Prostate gland (tissue), 2 donors: ENCODE measurements at regions of chr19 and their contacts with region 1.

Region 1: GRCh38 chr19:13861732-13862531 is 15.0 kb upstream of the NANOS3 start:
- DNase-seq: peak; percentile 89
- H3K4me3 ChIP-seq: peak overlapping the region; percentile 22 to 31
- H3K27ac ChIP-seq: peak overlapping the region; percentile 82 to 85
- H3K4me1 ChIP-seq: peaks cover 8% of the 10 kb centered on the region
- H3K27me3 ChIP-seq: no peaks in the 10 kb centered on the region
- CTCF ChIP-seq: peak; percentile 95 to 99 (median 98)
- POLR2A ChIP-seq: peak; percentile 8

Region 2: GRCh38 chr19:13150187-13150930 is 711.6 kb before region 1 on chr19 and contains the starts of genes IER2 and STX10:
- intact Hi-C with region 1: loop called (anchors 10 kb)
- DNase-seq: peak; percentile 95
- H3K4me3 ChIP-seq: peak within 1 kb of the TSS; percentile 83 to 92
- H3K27ac ChIP-seq: peak within 1 kb of the TSS; percentile 98 to 100
- H3K4me1 ChIP-seq: no peaks in the 10 kb centered on the region
- H3K27me3 ChIP-seq: no peaks in the 10 kb centered on the region
- CTCF ChIP-seq: peak; percentile 71 to 96 (median 84)
- POLR2A ChIP-seq: peak; percentile 81
- total RNA-seq, gene IER2: 34.7 to 75.7 TPM
- total RNA-seq, gene STX10: 42.5 to 48.6 TPM

Region 3: DNA sequence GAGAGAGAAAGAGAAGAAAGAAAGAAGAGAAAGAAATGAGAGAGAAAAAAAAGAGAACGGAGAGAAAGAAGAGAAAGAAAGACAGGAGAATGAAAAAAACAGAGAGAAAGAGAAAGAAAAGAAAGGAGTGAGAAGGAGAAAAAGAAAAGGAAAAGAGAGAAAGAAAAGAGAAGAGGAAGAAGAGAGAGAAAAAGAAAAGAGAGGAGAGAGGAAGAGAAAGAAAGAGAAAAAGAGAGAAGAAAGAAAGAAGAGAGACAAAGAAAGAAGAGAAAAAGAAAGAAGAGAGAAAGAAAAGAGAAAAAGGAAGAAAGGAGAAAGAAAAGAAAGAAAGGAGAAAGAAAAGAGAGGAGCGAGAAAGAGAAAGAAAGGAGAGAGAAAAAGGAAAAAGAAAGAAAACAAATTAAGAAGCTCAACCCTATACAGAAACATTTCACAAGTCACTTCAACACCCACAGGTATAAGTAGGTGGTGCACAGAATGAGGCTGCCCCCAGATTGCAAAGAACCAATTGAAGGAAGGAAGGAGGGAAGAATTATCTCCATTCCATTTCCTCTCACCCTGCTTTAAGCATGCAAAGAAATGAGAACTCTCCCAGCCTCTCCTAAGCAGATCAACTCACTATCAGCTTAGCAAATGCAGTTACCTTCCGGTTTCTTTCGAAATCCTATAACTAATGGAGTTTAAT is 256.9 kb before region 1 on chr19:
- intact Hi-C with region 1: loop called (anchors 10 kb)
- DNase-seq: no peak
- H3K4me3 ChIP-seq: no peak overlapping the region
- H3K27ac ChIP-seq: no peak overlapping the region
- H3K4me1 ChIP-seq: no peaks in the 10 kb centered on the region
- H3K27me3 ChIP-seq: no peaks in the 10 kb centered on the region
- CTCF ChIP-seq: no peak
- POLR2A ChIP-seq: no peak

Region 4: GRCh38 chr19:13621413-13621812 is 240.5 kb before region 1 on chr19:
- intact Hi-C with region 1: no loop called
- DNase-seq: no peak
- H3K4me3 ChIP-seq: no peak overlapping the region
- H3K27ac ChIP-seq: no peak overlapping the region
- H3K4me1 ChIP-seq: no peaks in the 10 kb centered on the region
- H3K27me3 ChIP-seq: peaks cover 6% of the 10 kb centered on the region
- CTCF ChIP-seq: no peak
- POLR2A ChIP-seq: no peak

Region 5: GRCh38 chr19:13784731-13785452 is 77.0 kb before region 1 on chr19:
- intact Hi-C with region 1: loop called (anchors 2 kb)
- DNase-seq: peak; percentile 75
- H3K4me3 ChIP-seq: no peak overlapping the region
- H3K27ac ChIP-seq: peak overlapping the region in 1 of 2 donors; percentile 7
- H3K4me1 ChIP-seq: no peaks in the 10 kb centered on the region
- H3K27me3 ChIP-seq: no peaks in the 10 kb centered on the region
- CTCF ChIP-seq: peak; percentile 52 to 87 (median 80)
- POLR2A ChIP-seq: no peak